ENCODE measurements at regions of chr4 and their contacts with region 1.

Region 1: GRCh38 chr4:119794704-119795103 is 166.1 kb upstream of the PDE5A start:
- DNase-seq: no peak
- ATAC-seq: no peak
- H3K4me3 ChIP-seq: no peak overlapping the region
- H3K27ac ChIP-seq: peak overlapping the region; percentile 23; the same call in 1 of the 2 replicates
- H3K4me1 ChIP-seq: no peaks in the 10 kb centered on the region; the same call in 1 of the 2 replicates
- H3K27me3 ChIP-seq: no peaks in the 10 kb centered on the region
- CTCF ChIP-seq: no peak

Region 2: GRCh38 chr4:119471259-119471658 is 323.4 kb before region 1 on chr4:
- CTCF ChIA-PET with region 1: no interaction called
- POLR2A ChIA-PET with region 1: interaction called, 18 read pairs
- in situ Hi-C with region 1: no loop called
- intact Hi-C with region 1: no loop called
- DNase-seq: no peak
- ATAC-seq: no peak
- H3K4me3 ChIP-seq: no peak overlapping the region
- H3K27ac ChIP-seq: no peak overlapping the region
- H3K4me1 ChIP-seq: no peaks in the 10 kb centered on the region
- H3K27me3 ChIP-seq: no peaks in the 10 kb centered on the region
- CTCF ChIP-seq: no peak

Region 3: GRCh38 chr4:120517966-120518365 is 723.3 kb after region 1 on chr4:
- CTCF ChIA-PET with region 1: no interaction called
- POLR2A ChIA-PET with region 1: no interaction called
- in situ Hi-C with region 1: no loop called
- intact Hi-C with region 1: no loop called
- DNase-seq: no peak
- ATAC-seq: no peak
- H3K4me3 ChIP-seq: no peak overlapping the region
- H3K27ac ChIP-seq: no peak overlapping the region
- H3K4me1 ChIP-seq: no peaks in the 10 kb centered on the region
- H3K27me3 ChIP-seq: no peaks in the 10 kb centered on the region
- CTCF ChIP-seq: no peak

Measured in Panc1 (cell line).